Tibial artery (tissue), 4 donors: ENCODE measurements at regions of chr1 and their contacts with region 1.

Region 1: GRCh38 chr1:89524369-89525168 is at the start of gene LRRC8B:
- DNase-seq: peak; percentile 85 to 91
- H3K4me3 ChIP-seq: peak within 1 kb of the TSS; percentile 75 to 77
- H3K27ac ChIP-seq: peak within 1 kb of the TSS; percentile 68 to 77
- H3K4me1 ChIP-seq: peaks cover 0 to 13% (median 5%) of the 10 kb centered on the region in 4 donors
- H3K27me3 ChIP-seq: no peaks in the 10 kb centered on the region
- CTCF ChIP-seq: no peak

Region 2: GRCh38 chr1:89632657-89633247 is 108.2 kb after region 1 on chr1 and contains the start of gene LRRC8C:
- intact Hi-C with region 1: loop called (anchors 10 kb)
- DNase-seq: peak; percentile 66 to 90
- H3K4me3 ChIP-seq: peak within 1 kb of the TSS; percentile 80 to 88
- H3K27ac ChIP-seq: peak within 1 kb of the TSS; percentile 79 to 83
- H3K4me1 ChIP-seq: peaks cover 0 to 20% (median 6%) of the 10 kb centered on the region in 4 donors
- H3K27me3 ChIP-seq: no peaks in the 10 kb centered on the region
- CTCF ChIP-seq: peak; percentile 26 to 59

Region 3: GRCh38 chr1:89994805-89995597 is 470.4 kb after region 1 on chr1 and contains the start of gene ZNF326:
- intact Hi-C with region 1: loop called (anchors 10 kb)
- DNase-seq: peak; percentile 93 to 97
- H3K4me3 ChIP-seq: peak within 1 kb of the TSS; percentile 71 to 78
- H3K27ac ChIP-seq: peak within 1 kb of the TSS; percentile 90 to 92
- H3K4me1 ChIP-seq: peaks cover 0 to 33% (median 14%) of the 10 kb centered on the region in 4 donors
- H3K27me3 ChIP-seq: no peaks in the 10 kb centered on the region
- CTCF ChIP-seq: no peak